ENCODE measurements at regions of chr9 and their contacts with region 1.

Region 1: DNA sequence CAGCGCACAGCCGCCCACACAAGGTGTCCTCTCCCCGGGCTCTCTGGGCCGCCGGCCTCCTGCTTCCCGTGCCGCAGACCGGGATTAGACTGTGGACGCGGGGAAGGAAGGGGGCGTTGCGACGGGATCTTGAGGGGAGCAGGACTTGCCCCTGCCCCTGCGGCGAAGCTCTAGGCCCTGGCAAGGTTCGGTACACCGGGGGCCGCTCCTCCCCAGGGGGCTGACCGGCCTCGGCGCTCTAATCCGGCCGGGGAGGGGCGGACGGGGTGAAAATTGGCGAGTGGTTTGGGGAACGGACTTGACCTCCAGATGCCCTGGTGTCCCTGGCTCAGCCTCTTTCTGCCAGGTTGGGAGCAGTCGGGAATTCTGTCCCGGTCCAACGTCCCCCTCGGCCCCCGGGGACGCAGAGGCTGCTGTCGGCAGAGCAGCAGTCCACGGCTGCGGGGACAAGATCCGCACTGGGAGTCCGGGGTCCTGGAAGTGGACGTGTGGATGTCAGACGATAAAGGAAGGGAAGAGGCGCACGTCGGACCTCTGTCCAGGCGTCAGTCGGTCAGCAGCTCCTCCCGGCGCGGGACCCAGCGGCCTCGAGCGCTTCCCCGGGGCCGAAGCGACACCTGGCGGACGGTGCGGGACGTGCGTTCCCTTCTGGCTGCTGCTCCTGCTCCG is 1.9 kb upstream of the CNTFR start:
- DNase-seq: peak; percentile 82
- H3K4me3 Mint-ChIP-seq: peak overlapping the region; percentile 25
- H3K27ac Mint-ChIP-seq: no peak overlapping the region
- H3K4me1 Mint-ChIP-seq: peaks cover 33% of the 10 kb centered on the region
- H3K27me3 Mint-ChIP-seq: peaks cover 89% of the 10 kb centered on the region

Region 2: DNA sequence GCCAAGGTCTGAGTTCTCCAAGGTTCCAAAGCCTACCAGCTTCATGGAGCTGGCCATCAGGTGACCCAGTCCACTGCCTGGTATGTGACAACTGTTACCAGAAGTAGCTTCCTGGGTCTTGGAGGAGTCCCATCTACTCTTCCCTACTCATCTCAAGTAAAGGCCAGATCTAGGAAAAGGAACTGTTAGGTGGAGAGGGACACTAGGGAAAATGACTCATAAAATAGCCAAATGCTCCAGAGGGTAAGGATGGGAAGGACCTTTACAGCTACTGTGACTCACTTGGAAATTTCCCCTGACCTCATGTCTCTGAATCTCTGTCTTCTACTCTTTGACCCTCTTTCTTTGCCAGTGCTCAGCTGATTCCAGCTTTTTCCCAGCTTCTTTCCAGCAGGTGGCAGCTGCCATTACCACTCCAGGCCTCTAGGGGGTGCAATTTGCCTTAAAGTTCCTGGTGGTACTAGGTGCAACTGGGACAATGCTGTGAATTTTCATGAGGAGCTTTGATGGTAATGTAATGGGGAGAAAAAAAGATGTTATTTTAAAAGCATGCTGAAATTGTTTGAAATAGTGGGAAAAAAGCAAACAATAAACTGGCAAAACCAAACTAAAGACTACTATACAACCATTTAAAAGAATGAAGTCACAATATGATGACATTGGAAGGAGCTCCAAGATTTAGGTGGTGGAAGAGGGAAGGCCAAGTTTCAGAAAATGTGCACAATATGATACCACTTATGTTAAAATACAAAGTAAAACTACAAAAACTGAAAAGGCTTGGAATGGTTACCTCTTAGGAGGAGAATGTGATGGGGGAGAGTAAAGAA is 187.6 kb before region 1 on chr9:
- CTCF ChIA-PET with region 1: interaction called, 12 read pairs
- DNase-seq: peak; percentile 71
- H3K4me3 Mint-ChIP-seq: no peak overlapping the region
- H3K27ac Mint-ChIP-seq: no peak overlapping the region
- H3K4me1 Mint-ChIP-seq: no peaks in the 10 kb centered on the region
- H3K27me3 Mint-ChIP-seq: no peaks in the 10 kb centered on the region

Region 3: GRCh38 chr9:34437006-34437925 is 154.1 kb before region 1 on chr9:
- CTCF ChIA-PET with region 1: interaction called, 13 read pairs
- DNase-seq: peak; percentile 76
- H3K4me3 Mint-ChIP-seq: no peak overlapping the region
- H3K27ac Mint-ChIP-seq: no peak overlapping the region
- H3K4me1 Mint-ChIP-seq: peaks cover 6% of the 10 kb centered on the region
- H3K27me3 Mint-ChIP-seq: no peaks in the 10 kb centered on the region

Region 4: GRCh38 chr9:34519321-34520020 is 71.9 kb before region 1 on chr9:
- CTCF ChIA-PET with region 1: interaction called, 11 read pairs
- DNase-seq: no peak
- H3K4me3 Mint-ChIP-seq: no peak overlapping the region
- H3K27ac Mint-ChIP-seq: no peak overlapping the region
- H3K4me1 Mint-ChIP-seq: peaks cover 15% of the 10 kb centered on the region
- H3K27me3 Mint-ChIP-seq: peaks cover 64% of the 10 kb centered on the region

Region 5: DNA sequence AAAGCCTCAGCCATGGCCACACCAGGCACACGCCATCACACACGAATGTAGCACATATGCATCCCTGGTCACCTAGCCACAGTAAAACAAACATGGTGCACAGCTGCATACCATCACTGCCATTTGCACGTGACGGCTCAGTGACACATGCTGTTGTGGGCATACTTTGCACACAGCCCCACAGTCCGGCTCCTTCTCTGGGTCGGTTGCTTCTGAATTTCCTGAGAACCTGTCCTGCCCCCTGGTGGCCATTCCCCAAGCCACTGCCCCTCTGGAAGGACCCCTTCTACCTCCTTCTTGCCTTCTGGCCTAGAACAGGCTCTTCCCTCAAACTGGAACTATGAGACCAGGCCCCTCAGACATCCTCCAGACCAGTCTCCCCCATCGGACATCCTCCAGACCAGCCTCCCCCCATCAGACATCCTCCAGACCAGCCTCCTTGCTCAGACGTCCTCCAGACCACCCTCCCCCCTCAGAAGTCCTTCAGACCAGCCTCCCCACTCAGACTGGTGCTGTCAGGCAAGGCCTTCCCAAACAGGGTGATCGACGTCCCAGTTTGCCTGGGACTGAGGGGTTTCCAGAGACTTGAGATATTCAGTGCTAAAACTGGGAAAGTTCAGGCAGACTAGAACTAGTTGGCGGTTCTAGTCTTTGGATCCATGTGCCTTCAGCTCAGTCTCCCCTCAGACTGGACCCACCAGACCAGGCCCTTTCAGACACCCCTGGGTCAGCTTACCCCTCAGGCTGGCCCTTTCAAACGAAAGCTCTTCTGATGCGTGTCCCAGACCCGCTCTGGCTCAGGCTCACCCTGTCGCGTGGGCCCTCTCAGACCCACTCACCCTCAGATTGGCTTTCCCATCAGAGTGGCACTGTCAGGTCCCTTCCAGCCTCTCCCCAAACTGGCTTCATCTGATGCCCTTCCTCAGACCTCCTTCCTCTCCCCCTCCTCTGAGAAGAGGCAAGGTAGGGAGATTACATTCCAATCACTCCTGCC is 44.3 kb before region 1 on chr9:
- CTCF ChIA-PET with region 1: interaction called, 26 read pairs
- DNase-seq: peak; percentile 70
- H3K4me3 Mint-ChIP-seq: no peak overlapping the region
- H3K27ac Mint-ChIP-seq: no peak overlapping the region
- H3K4me1 Mint-ChIP-seq: no peaks in the 10 kb centered on the region
- H3K27me3 Mint-ChIP-seq: peaks cover 34% of the 10 kb centered on the region

Region 6: DNA sequence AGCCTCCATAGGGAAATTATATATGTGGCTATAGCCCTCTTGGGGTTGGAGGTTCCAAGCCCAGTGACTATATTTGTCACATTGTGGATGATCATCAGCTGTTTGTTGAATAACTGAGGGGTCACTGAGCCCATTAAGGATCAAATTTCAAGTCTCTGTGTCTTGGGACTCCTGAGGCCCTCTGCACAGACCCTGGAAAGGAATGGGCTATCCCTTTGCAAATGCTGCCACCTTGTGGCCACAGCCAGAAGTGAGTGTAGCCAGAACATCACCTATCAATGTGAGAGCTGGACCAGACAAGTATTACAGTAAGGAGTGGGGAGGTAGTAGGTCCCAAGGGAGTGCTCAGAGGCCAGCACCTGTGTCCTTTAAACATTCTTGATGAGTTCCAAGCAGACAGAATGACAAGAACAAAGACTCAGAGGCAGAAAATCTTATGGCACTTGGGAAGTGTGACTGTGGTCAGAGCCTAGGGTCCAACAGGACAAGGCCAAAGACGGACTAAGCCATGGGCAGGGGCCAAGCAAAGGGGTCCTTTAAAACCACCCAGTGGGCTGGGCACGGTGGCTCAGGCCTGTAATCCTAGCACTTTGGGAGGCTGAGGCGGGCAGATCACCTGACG is 12.3 kb after region 1 on chr9:
- CTCF ChIA-PET with region 1: interaction called, 12 read pairs
- DNase-seq: peak; percentile 88
- H3K4me3 Mint-ChIP-seq: no peak overlapping the region
- H3K27ac Mint-ChIP-seq: no peak overlapping the region
- H3K4me1 Mint-ChIP-seq: no peaks in the 10 kb centered on the region
- H3K27me3 Mint-ChIP-seq: peaks cover 39% of the 10 kb centered on the region